ENCODE measurements at regions of chr5 and their contacts with region 1.

Region 1: GRCh38 chr5:5675511-5675910 is 253.0 kb downstream of the ICE1 start:
- DNase-seq: no peak
- H3K4me3 ChIP-seq: no peak overlapping the region
- H3K27ac ChIP-seq: no peak overlapping the region
- H3K4me1 ChIP-seq: no peaks in the 10 kb centered on the region
- CTCF ChIP-seq: no peak

Region 2: GRCh38 chr5:4674166-4674565 is 1001.3 kb before region 1 on chr5:
- CTCF ChIA-PET with region 1: no interaction called
- POLR2A ChIA-PET with region 1: no interaction called
- intact Hi-C with region 1: no loop called
- DNase-seq: no peak
- H3K4me3 ChIP-seq: no peak overlapping the region
- H3K27ac ChIP-seq: no peak overlapping the region
- H3K4me1 ChIP-seq: no peaks in the 10 kb centered on the region
- CTCF ChIP-seq: no peak

Region 3: GRCh38 chr5:5665225-5666075 is 10.1 kb before region 1 on chr5:
- CTCF ChIA-PET with region 1: no interaction called
- POLR2A ChIA-PET with region 1: interaction called, 11 read pairs
- intact Hi-C with region 1: no loop called
- DNase-seq: no peak
- H3K4me3 ChIP-seq: no peak overlapping the region
- H3K27ac ChIP-seq: no peak overlapping the region
- H3K4me1 ChIP-seq: no peaks in the 10 kb centered on the region
- CTCF ChIP-seq: no peak

Region 4: GRCh38 chr5:5822729-5823257 is 147.3 kb after region 1 on chr5:
- CTCF ChIA-PET with region 1: no interaction called
- POLR2A ChIA-PET with region 1: no interaction called
- intact Hi-C with region 1: no loop called
- DNase-seq: no peak
- H3K4me3 ChIP-seq: no peak overlapping the region
- H3K27ac ChIP-seq: no peak overlapping the region
- H3K4me1 ChIP-seq: no peaks in the 10 kb centered on the region
- CTCF ChIP-seq: no peak

Measured in OCI-LY7 (cell line).